BJ (cell line): ENCODE measurements at regions of chr10 and their contacts with region 1.

Region 1: DNA sequence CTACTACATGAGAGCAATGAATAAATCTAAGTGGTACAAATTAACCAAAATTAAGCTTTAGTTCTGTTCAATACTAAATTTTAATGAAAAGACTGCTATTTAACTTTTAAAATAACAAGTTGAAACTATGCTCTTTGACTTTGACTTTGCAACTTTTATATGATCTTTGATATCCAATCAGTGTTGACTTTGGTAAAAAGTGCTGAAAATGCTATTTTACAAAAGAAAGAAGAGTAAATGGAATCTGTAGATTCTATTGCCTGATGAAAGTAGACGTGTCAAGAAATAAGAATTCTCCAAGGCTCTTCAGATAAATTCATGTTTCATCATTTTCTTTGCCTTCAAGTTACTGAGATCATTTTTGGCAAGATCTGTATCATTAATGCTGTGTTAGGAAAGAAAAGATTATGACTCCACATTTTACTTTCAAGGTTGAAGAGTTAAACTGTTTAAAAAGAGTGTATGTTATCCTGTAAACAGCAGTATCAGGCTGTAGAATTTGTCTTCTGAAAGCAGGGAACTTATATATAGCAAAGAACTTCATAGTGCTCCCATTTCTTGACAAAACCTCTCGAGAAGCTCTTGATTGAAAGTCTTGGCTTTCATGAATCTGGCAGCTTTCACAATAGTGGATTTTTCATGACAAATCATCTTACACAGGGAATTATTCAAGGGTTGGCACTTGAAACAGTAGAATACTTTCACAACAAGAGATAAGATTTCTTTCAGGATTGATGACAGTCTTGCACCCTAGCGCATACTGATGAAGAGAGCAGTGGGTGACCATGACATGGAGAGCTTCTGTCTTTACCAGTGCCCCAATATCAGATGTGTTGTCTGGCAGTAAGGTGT is 72.1 kb downstream of the PTEN start:
- DNase-seq: no peak
- H3K4me3 ChIP-seq: no peak overlapping the region
- H3K27me3 ChIP-seq: no peaks in the 10 kb centered on the region
- CTCF ChIP-seq: no peak

Region 2: DNA sequence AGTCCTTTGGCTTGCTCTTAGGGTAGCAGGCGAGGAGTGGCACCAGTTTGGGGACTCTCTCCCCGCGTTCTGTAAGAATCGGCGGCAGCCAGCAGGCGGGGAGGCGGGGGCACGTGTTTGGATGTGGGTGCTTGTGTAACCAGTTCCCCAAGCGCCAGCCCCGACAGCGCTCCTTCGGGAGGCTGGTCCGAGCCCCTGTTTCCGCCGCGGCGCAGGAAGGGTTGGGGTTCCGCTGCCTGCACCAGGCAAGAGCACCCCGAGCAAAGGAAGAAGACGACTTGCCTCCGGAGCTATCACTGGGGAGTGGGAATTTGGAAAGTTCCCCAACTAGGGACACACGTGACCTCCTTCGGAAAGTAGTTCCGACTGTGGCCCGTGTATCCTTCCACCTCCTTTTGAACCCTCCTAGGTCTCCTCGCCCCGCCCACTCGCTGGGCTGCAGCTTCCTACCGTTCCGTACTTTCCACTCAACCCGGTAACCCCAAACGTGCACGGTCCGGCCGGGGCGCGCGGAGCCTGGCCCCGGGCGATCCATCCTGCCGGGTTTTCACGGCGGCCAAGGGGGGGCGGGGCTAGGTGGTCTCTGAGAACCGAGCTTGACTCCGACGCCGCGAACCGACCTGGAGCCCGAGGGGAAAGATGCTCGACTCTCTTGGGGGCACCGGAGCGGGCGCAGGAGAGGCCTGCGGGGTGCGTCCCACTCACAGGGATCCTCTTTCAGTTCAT is 73.4 kb before region 1 on chr10:
- CTCF ChIA-PET with region 1: no interaction called
- POLR2A ChIA-PET with region 1: interaction called, 10 read pairs
- DNase-seq: peak; percentile 73
- H3K4me3 ChIP-seq: peak overlapping the region; percentile 84
- H3K27me3 ChIP-seq: no peaks in the 10 kb centered on the region
- CTCF ChIP-seq: no peak

Region 3: GRCh38 chr10:87918254-87918859 is 17.2 kb before region 1 on chr10:
- CTCF ChIA-PET with region 1: no interaction called
- POLR2A ChIA-PET with region 1: no interaction called
- DNase-seq: no peak
- H3K4me3 ChIP-seq: no peak overlapping the region
- H3K27me3 ChIP-seq: no peaks in the 10 kb centered on the region
- CTCF ChIP-seq: no peak